Aorta (tissue), 5 donors: ENCODE measurements at regions of chr20 and their contacts with region 1.

Region 1: DNA sequence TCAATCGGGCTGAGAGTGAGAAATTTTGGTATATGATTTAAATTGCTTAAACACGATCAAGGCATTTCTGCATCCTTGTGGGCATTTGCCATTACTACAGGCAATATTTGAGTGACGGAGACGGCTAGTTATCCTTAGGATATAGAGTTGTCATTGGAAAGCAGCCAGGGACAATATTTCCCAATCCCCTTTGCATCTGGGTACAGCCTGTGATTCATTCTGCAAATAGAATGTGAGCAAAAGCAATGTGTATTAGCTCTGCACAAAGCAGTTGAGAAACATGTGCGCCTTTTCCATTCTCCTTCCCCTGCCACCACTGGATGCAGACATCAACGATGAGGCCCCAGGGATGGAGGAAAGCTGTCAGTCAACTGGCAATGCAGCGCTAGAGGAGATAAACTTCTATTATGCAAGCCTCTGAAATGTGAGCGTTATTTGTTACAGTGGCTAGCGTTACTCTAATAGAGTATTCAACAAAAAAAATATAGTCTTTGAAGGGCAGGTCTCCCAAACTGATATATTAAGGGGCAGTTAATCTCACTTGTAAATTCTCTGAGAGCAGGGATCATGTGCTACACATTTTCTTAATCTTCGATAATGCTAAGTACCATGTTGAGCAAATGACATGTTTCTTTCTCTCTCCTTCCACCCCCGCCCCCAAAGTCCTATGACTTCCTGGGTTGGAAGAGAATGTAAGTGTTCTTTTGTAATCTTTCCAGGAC is 37.1 kb upstream of the NCOA3 start:
- DNase-seq: peak in 1 of 2 donors; percentile 57
- ATAC-seq: peak; percentile 89
- H3K4me3 ChIP-seq: no peak overlapping the region
- H3K27ac ChIP-seq: peak overlapping the region; percentile 54 to 98
- H3K4me1 ChIP-seq: no peaks in the 10 kb centered on the region
- H3K27me3 ChIP-seq: no peaks in the 10 kb centered on the region

Region 2: DNA sequence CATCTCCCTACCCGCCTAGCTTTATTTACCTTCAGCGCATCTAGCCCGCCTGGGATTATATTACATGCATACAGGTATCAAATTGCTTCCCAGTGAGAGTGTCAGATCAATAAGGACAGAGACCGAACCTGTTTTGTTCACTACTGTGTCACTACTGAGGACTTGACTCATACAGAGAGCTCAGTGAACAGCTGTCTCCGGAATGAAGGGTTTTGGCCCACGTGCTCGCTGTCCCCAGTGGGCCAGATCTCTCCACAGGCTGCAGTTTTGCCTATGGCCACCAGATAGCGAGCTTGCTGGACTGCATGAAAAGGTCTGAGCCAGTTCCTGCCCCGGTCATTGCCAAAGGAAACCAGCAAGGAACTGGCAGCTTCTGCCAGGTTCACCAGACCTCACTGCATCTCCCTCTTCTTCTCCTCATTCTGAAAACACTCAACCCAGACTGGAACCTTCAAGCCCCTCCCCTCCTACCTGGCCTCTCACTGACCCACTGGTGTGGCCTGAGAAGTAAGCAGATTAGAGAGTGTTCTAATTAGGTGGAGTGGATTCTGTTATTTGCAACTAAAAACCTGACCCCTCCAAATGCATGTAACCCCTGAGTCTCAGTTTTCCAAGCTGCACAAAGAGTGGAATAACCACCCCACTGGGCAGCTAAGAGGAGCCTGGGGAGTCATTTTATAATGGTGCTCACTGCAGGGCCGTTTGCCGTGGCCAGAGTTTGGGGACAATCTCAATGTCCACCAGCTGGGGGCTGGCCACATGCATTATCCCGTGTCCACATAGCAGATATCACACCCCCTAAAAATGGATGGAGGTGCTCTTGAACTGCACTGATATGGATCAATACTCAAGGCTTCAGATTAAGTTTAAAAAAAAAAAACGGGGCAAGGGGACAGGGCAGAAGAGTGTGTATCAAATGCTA is 258.7 kb before region 1 on chr20:
- intact Hi-C with region 1: loop called in 1 of 2 experiments (anchors 10 kb)
- DNase-seq: peak in 1 of 2 donors; percentile 91
- ATAC-seq: peak; percentile 59
- H3K4me3 ChIP-seq: no peak overlapping the region
- H3K27ac ChIP-seq: no peak overlapping the region
- H3K4me1 ChIP-seq: no peaks in the 10 kb centered on the region
- H3K27me3 ChIP-seq: no peaks in the 10 kb centered on the region

Region 3: DNA sequence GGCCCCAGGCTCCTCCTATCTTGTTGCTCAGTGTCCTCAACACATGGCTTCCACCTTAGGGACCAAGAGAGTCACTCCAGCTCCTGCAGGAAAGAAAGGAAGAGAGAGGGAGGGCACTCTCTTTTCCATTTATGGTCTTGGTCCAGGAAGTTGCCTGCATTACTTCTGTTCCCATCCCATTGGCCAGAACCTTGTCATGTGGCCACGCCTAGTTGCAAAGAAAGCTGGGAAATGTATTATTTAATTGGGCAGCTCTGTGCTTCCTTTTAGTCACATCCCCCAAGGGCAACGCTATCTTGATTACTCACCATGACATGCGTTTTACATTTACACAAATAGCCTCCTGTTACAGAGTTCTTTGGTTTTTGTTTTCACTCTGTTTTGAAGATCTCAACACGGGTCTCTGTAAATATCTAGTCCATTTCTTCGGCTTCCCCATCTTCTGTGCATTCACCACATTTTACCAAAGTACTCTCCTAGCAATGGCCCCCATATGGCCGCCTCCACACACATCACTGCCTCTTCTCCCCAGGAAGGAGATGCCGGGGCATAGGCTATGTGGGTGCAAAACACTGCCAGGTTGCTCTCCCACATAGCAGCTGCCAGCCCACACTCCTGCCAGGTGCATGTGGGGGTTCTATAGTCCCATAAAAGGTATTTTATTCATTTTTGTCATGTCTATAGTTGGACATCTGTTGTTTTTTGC is 72.4 kb before region 1 on chr20:
- intact Hi-C with region 1: loop called in 1 of 2 experiments (anchors 5 kb)
- DNase-seq: no peak
- ATAC-seq: peak; percentile 15
- H3K4me3 ChIP-seq: no peak overlapping the region
- H3K27ac ChIP-seq: no peak overlapping the region
- H3K4me1 ChIP-seq: no peaks in the 10 kb centered on the region
- H3K27me3 ChIP-seq: no peaks in the 10 kb centered on the region

Region 4: GRCh38 chr20:48283305-48284080 is 819.0 kb after region 1 on chr20:
- intact Hi-C with region 1: no loop called
- DNase-seq: peak; percentile 78 to 88
- ATAC-seq: peak; percentile 81
- H3K4me3 ChIP-seq: no peak overlapping the region
- H3K27ac ChIP-seq: peak overlapping the region in 1 of 2 donors; percentile 22
- H3K4me1 ChIP-seq: peaks cover 3 to 6% of the 10 kb centered on the region in 2 donors
- H3K27me3 ChIP-seq: no peaks in the 10 kb centered on the region